ENCODE measurements at regions of chr1 and their contacts with region 1.

Region 1: GRCh38 chr1:151340870-151341754 is 5.9 kb downstream of the RFX5 start:
- DNase-seq: no peak
- H3K4me3 ChIP-seq: no peak overlapping the region
- H3K27ac ChIP-seq: peak overlapping the region; percentile 33 to 55 (median 48)
- H3K4me1 ChIP-seq: peaks cover 0 to 10% (median 7%) of the 10 kb centered on the region in 4 donors
- H3K27me3 ChIP-seq: no peaks in the 10 kb centered on the region
- CTCF ChIP-seq: peak; percentile 66 to 73 (median 70)
- EP300 ChIP-seq: no peak
- POLR2A ChIP-seq: no peak

Region 2: DNA sequence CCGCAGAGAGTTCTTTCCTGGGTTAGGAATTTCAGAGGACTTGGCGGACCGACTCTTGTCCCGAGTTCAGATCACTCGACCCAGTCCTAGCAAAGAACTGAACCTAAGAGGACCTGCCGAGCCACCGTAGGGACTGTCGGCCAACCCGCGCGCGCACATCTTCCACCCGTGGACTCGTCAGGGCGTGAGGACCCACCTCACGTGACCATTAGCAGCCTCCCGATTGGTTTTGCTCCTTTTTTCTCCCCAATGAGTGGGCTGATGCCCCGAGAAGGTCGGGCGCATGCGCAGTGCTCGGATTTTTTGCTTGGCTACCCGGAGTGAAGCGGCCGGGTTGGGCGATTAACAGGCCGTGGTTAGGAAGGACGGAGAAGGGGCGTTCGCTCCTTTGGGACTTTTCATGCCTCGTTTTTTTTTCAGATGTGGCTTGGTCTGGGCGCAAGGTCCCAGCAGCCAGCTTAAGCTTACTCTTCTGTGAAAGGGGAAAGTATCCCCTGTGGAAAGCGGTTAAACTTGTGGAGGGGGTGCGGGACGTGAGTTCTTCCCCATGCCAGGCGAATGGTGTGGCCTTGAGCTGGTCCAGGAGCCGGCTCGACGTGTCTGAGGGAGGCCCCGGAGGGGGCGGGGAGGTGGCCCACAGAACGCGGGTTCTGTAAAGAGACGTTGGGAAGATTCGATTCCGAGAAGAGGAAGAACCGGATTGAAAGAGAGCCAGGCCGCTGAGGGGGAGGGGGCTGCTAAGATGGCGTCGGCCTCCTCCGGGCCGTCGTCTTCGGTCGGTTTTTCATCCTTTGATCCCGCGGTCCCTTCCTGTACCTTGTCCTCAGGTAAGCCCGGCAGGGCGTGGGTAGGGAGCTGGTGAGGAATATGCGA is 142.6 kb before region 1 on chr1 and contains the start of gene PIP5K1A:
- intact Hi-C with region 1: loop called (anchors 2 kb)
- DNase-seq: peak; percentile 100
- H3K4me3 ChIP-seq: peak within 1 kb of the TSS; percentile 62 to 88 (median 70)
- H3K27ac ChIP-seq: peak within 1 kb of the TSS; percentile 90 to 95 (median 93)
- H3K4me1 ChIP-seq: peaks cover 0 to 47% (median 38%) of the 10 kb centered on the region in 4 donors
- H3K27me3 ChIP-seq: no peaks in the 10 kb centered on the region
- CTCF ChIP-seq: no peak
- EP300 ChIP-seq: no peak
- POLR2A ChIP-seq: peak; percentile 84 to 93
- total RNA-seq, gene PIP5K1A: 33.2 to 51.5 (median 37.8) TPM

Region 3: GRCh38 chr1:151294742-151295462 is 46.2 kb before region 1 on chr1:
- intact Hi-C with region 1: loop called (anchors 1 kb)
- DNase-seq: no peak
- H3K4me3 ChIP-seq: no peak overlapping the region
- H3K27ac ChIP-seq: no peak overlapping the region
- H3K4me1 ChIP-seq: no peaks in the 10 kb centered on the region
- H3K27me3 ChIP-seq: no peaks in the 10 kb centered on the region
- CTCF ChIP-seq: no peak
- EP300 ChIP-seq: no peak
- POLR2A ChIP-seq: no peak

Measured in sigmoid colon (tissue), 7 donors.